ENCODE measurements at regions of chr11 and their contacts with region 1.

Region 1: GRCh38 chr11:46238967-46239800 is 38.3 kb upstream of the CREB3L1 start:
- DNase-seq: peak; percentile 86
- ATAC-seq: peak; percentile 81
- H3K4me3 ChIP-seq: peak overlapping the region in 2 of 5 experiments; percentile 25
- H3K4me3 Mint-ChIP-seq: peak overlapping the region; percentile 75
- H3K27ac ChIP-seq: no peak overlapping the region
- H3K27ac Mint-ChIP-seq: no peak overlapping the region
- H3K4me1 ChIP-seq: peaks cover 30 to 31% of the 10 kb centered on the region in 2 donors
- H3K4me1 Mint-ChIP-seq: peaks cover 35% of the 10 kb centered on the region
- H3K27me3 ChIP-seq: peaks cover 0 to 48% (median 26%) of the 10 kb centered on the region in 4 experiments
- H3K27me3 Mint-ChIP-seq: peaks cover 56% of the 10 kb centered on the region
- CTCF ChIP-seq: peak; percentile 98

Region 2: GRCh38 chr11:44814881-44815592 is 1424.1 kb before region 1 on chr11:
- CTCF ChIA-PET with region 1: no interaction called
- POLR2A ChIA-PET with region 1: no interaction called
- intact Hi-C with region 1: no loop called
- DNase-seq: no peak
- ATAC-seq: no peak
- H3K4me3 ChIP-seq: no peak overlapping the region
- H3K4me3 Mint-ChIP-seq: no peak overlapping the region
- H3K27ac ChIP-seq: no peak overlapping the region
- H3K27ac Mint-ChIP-seq: no peak overlapping the region
- H3K4me1 ChIP-seq: no peaks in the 10 kb centered on the region
- H3K4me1 Mint-ChIP-seq: no peaks in the 10 kb centered on the region
- H3K27me3 ChIP-seq: no peaks in the 10 kb centered on the region
- H3K27me3 Mint-ChIP-seq: no peaks in the 10 kb centered on the region
- CTCF ChIP-seq: no peak

Region 3: GRCh38 chr11:46216019-46216764 is 23.0 kb before region 1 on chr11:
- CTCF ChIA-PET with region 1: no interaction called
- POLR2A ChIA-PET with region 1: no interaction called
- intact Hi-C with region 1: no loop called
- DNase-seq: no peak
- ATAC-seq: no peak
- H3K4me3 ChIP-seq: no peak overlapping the region
- H3K4me3 Mint-ChIP-seq: no peak overlapping the region
- H3K27ac ChIP-seq: no peak overlapping the region
- H3K27ac Mint-ChIP-seq: no peak overlapping the region
- H3K4me1 ChIP-seq: no peaks in the 10 kb centered on the region
- H3K4me1 Mint-ChIP-seq: no peaks in the 10 kb centered on the region
- H3K27me3 ChIP-seq: peaks cover 0 to 7% (median 0%) of the 10 kb centered on the region in 4 experiments
- H3K27me3 Mint-ChIP-seq: peaks cover 38% of the 10 kb centered on the region
- CTCF ChIP-seq: no peak

Region 4: GRCh38 chr11:46308631-46309419 is 69.6 kb after region 1 on chr11:
- CTCF ChIA-PET with region 1: interaction called, 50 read pairs
- POLR2A ChIA-PET with region 1: interaction called, 5 read pairs
- intact Hi-C with region 1: loop called (anchors 1 kb)
- DNase-seq: peak; percentile 51
- ATAC-seq: peak; percentile 39
- H3K4me3 ChIP-seq: no peak overlapping the region
- H3K4me3 Mint-ChIP-seq: no peak overlapping the region
- H3K27ac ChIP-seq: no peak overlapping the region
- H3K27ac Mint-ChIP-seq: no peak overlapping the region
- H3K4me1 ChIP-seq: peaks cover 0 to 7% of the 10 kb centered on the region in 2 donors
- H3K4me1 Mint-ChIP-seq: peaks cover 7% of the 10 kb centered on the region
- H3K27me3 ChIP-seq: peaks cover 0 to 18% (median 1%) of the 10 kb centered on the region in 4 experiments
- H3K27me3 Mint-ChIP-seq: peaks cover 44% of the 10 kb centered on the region
- CTCF ChIP-seq: peak; percentile 78

Region 5: DNA sequence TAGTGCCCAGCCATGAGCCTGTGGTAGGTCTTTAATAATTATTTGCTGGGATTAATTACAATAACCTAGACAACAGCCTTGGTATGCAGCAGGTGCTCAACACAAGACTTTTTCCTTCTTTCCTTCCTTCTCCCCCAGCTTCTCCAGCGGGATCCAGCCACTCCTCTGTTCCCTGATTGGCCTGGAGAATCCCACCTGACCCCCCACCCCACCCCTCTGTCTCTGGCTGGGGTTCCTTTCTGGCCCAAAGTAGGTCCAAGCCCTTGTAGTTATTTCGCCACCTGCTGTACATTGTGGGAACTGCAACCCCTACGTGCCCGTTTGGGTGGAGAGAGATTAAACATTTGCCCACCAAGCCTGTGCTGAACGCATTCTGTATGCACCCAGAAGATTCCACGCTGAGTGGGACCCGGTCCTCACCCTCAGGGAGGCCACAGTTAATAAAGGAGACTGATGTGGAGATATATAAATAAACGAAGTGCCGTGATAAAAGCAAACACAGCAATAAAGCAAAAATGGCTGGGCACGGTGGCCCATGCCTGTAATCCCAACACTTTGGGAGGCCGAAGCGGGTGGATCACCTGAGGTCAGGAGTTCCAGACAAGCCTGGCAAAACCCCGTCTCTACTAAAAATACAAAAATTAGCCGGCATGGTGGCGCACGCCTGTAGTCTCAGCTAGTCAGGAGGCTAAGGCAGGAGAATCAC is 76.0 kb after region 1 on chr11:
- CTCF ChIA-PET with region 1: interaction called, 50 read pairs
- POLR2A ChIA-PET with region 1: no interaction called
- intact Hi-C with region 1: loop called (anchors 1 kb)
- DNase-seq: peak; percentile 75
- ATAC-seq: peak; percentile 68
- H3K4me3 ChIP-seq: no peak overlapping the region
- H3K4me3 Mint-ChIP-seq: no peak overlapping the region
- H3K27ac ChIP-seq: no peak overlapping the region
- H3K27ac Mint-ChIP-seq: no peak overlapping the region
- H3K4me1 ChIP-seq: peaks cover 15 to 16% of the 10 kb centered on the region in 2 donors
- H3K4me1 Mint-ChIP-seq: peaks cover 16% of the 10 kb centered on the region
- H3K27me3 ChIP-seq: peaks cover 0 to 3% (median 1%) of the 10 kb centered on the region in 4 experiments
- H3K27me3 Mint-ChIP-seq: peaks cover 16% of the 10 kb centered on the region
- CTCF ChIP-seq: peak; percentile 88

Region 6: GRCh38 chr11:46367244-46367915 is 128.2 kb after region 1 on chr11:
- CTCF ChIA-PET with region 1: interaction called, 9 read pairs
- POLR2A ChIA-PET with region 1: no interaction called
- intact Hi-C with region 1: loop called (anchors 1 kb)
- DNase-seq: peak; percentile 74
- ATAC-seq: peak; percentile 75
- H3K4me3 ChIP-seq: no peak overlapping the region
- H3K4me3 Mint-ChIP-seq: no peak overlapping the region
- H3K27ac ChIP-seq: no peak overlapping the region
- H3K27ac Mint-ChIP-seq: no peak overlapping the region
- H3K4me1 ChIP-seq: peaks cover 2 to 13% of the 10 kb centered on the region in 2 donors
- H3K4me1 Mint-ChIP-seq: peaks cover 13% of the 10 kb centered on the region
- H3K27me3 ChIP-seq: no peaks in the 10 kb centered on the region
- H3K27me3 Mint-ChIP-seq: no peaks in the 10 kb centered on the region
- CTCF ChIP-seq: peak; percentile 87